ENCODE measurements at regions of chr17 and their contacts with region 1.

Region 1: GRCh38 chr17:50213026-50214022 is 11.9 kb upstream of the COL1A1 start:
- DNase-seq: no peak
- H3K4me3 ChIP-seq: no peak overlapping the region
- CTCF ChIP-seq: no peak
- POLR2A ChIP-seq: no peak

Region 2: DNA sequence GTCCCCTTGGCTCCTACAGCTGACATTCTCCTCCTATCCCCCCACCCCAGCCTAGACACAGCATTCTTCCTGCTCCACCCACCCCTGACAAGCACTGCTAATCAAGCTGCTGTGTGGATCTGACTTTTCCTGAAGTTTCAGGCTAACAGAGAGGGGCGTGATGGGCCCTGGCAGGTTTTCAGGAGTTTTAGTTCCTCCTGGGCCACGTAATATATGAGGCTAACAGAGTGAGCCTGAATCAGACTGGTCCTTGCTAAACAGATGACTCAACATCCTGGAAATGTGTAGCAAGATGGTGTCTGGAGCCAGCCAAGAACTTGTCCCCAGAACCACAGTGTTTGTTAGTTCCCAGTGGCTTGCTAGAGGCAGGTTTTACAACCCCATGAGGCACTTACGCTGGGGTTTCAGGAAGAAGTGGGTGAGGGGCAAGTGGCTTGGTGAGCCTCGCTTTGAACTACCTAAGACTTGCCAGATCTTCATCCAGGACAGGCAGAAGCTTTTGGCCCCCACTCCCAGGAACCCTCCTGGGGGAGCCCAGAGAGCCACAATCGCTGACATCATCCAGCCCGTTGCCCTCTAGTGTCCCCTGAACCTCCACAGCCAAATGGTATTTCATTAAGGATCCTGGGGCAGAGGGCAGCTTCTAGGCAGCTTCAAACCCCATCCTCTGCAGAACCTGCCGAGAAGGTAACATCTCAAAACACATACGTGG is 76.8 kb after region 1 on chr17:
- intact Hi-C with region 1: loop called (anchors 5 kb)
- DNase-seq: peak; percentile 89 to 96
- H3K4me3 ChIP-seq: no peak overlapping the region
- CTCF ChIP-seq: no peak
- POLR2A ChIP-seq: no peak

Measured in lower leg skin (tissue), 4 donors.